Posterior vena cava (tissue), 2 donors: ENCODE measurements at regions of chrX and their contacts with region 1.

Region 1: DNA sequence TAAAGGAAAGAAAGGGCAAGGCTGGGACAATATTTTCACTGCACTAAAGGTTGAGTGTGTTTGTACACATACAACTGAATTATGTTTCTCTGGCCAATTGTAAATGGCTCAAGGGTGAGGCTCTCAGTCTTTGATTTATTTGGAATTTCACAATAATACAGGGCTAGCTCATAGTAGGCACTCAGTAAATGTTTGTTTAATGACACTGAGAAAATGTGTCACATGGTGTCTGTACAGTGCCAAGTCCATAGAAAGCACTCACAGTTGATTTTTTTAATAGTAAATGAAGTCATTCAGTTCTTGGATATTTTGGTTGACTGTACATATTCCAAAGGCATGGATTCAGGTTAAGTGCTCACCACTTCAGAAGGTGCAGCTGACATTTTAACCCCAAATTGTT is 176.3 kb downstream of the IL1RAPL2 start:
- DNase-seq: no peak

Region 2: DNA sequence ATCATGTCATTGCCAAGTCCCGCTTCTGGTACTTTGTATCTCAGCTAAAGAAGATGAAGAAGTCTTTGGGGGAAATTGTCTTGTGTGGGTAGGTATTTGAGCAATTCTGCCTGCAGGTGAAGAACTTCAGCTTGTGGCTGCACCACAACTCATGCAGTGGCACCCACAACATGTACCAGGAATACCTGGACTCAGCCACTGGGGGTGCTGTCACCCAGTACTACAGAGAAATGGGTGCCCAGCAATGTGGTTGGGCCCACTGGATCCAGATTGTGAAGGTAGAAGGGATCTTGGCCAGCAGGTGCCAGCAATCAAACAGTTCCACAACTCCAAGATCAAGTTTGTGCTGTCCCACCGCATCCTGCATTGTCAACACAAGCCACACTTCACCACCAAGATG is 61.7 kb after region 1 on chrX:
- intact Hi-C with region 1: loop called in 1 of 2 experiments (anchors 2 kb)
- DNase-seq: no peak